ENCODE measurements at regions of chr6 and their contacts with region 1.

Region 1: DNA sequence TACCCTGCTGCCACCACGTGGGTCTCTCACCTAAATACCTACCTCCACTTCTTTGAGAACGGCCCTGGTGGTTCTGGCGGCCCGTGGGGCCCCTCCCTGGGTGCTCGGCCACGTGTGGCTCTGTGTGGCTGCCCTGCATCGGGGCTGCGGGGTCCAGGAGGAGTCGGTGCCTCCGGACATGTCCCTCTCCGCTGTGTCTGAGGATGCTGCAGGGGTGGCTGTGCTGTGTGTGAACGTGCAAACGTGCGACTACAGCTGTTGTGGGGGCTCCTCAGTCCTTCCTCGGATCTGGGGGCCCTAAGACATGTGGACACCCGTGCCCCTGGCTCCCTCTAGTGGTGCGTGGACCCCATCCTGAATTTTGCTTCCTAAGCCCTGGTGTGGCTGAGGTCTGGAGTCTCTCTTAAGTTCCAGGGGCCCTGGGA is 691.8 kb downstream of the QKI start:
- DNase-seq: peak; percentile 50 to 73
- ATAC-seq: peak in 1 of 4 donors; percentile 15
- H3K4me3 ChIP-seq: no peak overlapping the region
- H3K27ac ChIP-seq: peak overlapping the region; percentile 99
- H3K4me1 ChIP-seq: peaks cover 39% of the 10 kb centered on the region
- H3K27me3 ChIP-seq: no peaks in the 10 kb centered on the region
- CTCF ChIP-seq: peak; percentile 33

Region 2: GRCh38 chr6:163180874-163181541 is 925.3 kb before region 1 on chr6:
- intact Hi-C with region 1: loop called (anchors 2 to 5 kb)
- DNase-seq: peak; percentile 75 to 90
- ATAC-seq: peak; percentile 93 to 96 (median 94)
- H3K4me3 ChIP-seq: peak overlapping the region; percentile 54
- H3K27ac ChIP-seq: peak overlapping the region; percentile 48
- H3K4me1 ChIP-seq: peaks cover 27% of the 10 kb centered on the region
- H3K27me3 ChIP-seq: no peaks in the 10 kb centered on the region
- CTCF ChIP-seq: peak; percentile 89

Region 3: DNA sequence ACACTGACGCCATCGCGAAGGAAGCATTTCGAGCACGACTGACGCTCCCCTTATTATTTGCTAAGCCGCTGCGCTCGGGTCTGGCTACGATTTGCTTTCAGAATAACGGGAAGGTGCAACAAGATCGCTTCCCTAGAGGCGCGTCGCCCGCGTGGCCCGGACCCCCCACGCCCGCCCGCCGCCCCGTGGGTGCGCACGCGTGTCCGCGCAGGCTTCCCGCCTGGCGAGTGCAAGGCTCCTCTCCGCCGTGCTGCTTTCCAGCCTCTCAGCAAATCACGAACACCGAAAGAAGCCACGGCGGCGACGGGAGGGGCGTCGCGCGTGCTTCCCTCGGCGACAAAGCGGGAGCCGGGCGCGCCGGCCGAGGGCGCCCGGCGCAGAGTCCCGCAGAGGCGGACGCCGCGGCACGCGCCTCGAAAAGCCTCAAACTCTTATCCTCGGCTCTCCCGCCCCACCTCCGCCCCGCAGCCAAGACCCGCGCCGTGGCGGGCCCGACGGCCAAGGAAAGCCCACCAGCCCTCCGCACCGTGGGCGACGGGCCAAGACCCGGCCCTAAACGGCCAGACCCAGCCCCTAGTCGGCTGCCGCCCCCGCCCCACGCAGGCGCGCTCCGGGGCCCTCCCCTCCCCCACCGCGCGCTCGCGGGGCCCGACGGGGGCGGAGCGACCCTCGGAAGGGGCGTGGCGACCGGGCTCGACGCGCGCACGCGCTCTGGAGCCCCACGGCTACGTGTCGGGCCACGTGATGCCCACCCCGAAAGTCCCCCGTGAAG is 692.8 kb before region 1 on chr6:
- intact Hi-C with region 1: loop called in 1 of 2 experiments (anchors 1 kb)
- DNase-seq: peak; percentile 90 to 95
- ATAC-seq: peak; percentile 85 to 92 (median 89)
- H3K4me3 ChIP-seq: peak overlapping the region; percentile 73
- H3K27ac ChIP-seq: peak overlapping the region; percentile 98
- H3K4me1 ChIP-seq: peaks cover 1% of the 10 kb centered on the region
- H3K27me3 ChIP-seq: no peaks in the 10 kb centered on the region
- CTCF ChIP-seq: no peak

Region 4: DNA sequence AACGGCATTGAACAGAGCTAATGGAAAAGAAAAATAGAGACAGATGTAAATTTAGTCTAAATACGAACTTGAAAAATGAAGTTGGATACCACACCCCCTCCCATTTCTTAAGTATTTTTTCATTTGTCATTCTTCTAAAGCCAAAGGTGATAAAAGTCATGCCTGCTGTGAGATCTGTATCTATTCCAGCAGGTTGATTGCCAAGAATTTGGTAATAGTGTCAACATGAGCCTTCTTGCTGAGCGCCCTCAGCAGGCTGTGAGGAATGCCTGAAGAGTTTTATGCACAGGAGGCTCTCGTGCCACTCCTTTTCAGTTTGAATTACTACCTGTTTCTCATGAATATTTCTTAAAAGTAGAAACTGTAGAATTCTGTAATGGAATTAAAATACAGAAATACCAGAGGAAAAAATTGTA is 526.5 kb before region 1 on chr6:
- intact Hi-C with region 1: loop called in 1 of 2 experiments (anchors 5 kb)
- DNase-seq: no peak
- ATAC-seq: peak; percentile 50 to 70 (median 65)
- H3K4me3 ChIP-seq: no peak overlapping the region
- H3K27ac ChIP-seq: peak overlapping the region; percentile 83
- H3K4me1 ChIP-seq: peaks cover 55% of the 10 kb centered on the region
- H3K27me3 ChIP-seq: no peaks in the 10 kb centered on the region
- CTCF ChIP-seq: peak; percentile 31

Region 5: DNA sequence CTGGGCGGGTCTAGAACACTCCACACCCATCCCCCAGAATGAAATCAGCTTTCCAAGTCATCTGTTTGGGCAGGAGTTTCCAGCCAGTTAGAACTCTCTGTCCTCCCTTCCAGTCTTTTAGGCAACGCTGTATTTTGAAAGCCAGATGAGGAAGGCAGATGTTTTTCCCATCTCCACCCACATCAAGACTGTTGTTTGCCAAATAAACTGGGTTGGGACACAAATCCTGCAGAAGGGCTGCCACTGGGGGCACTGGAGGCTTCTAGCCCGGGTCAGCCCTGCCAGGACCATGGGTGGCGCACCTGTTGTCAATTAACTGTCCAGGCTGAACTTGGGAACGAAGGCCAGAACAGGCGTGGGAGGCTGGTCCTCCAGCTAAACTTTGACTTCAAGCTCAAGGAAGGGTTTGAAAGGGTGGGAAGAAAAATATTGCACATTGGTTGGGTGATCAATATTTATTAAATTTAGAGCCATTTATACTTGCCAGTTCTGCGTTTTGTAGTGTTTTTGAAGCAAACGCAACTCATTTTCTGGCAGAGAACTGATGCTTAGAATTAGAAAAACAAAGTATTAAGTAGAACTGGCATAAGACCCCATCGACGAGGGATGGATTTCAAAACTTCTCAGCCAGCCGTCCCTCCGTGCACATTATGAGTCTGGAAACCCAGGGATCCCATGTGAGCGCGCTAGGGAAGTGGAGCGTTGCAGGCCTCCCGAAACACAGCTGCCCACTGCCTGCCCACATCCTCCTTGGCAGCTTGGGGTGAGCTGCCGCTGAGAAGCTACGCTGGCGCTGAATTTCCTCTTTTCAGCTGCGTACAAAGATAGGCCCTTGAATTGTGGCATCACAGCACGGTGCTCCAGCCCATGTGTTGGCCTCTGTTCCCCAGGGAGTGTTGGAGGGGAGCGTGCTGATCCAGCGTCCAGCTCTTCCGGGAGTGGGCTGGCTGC is 394.5 kb before region 1 on chr6:
- intact Hi-C with region 1: loop called in 1 of 2 experiments (anchors 10 kb)
- DNase-seq: peak; percentile 94 to 95
- ATAC-seq: peak; percentile 66 to 86 (median 82)
- H3K4me3 ChIP-seq: no peak overlapping the region
- H3K27ac ChIP-seq: peak overlapping the region; percentile 76
- H3K4me1 ChIP-seq: peaks cover 61% of the 10 kb centered on the region
- H3K27me3 ChIP-seq: no peaks in the 10 kb centered on the region
- CTCF ChIP-seq: peak; percentile 48

Region 6: DNA sequence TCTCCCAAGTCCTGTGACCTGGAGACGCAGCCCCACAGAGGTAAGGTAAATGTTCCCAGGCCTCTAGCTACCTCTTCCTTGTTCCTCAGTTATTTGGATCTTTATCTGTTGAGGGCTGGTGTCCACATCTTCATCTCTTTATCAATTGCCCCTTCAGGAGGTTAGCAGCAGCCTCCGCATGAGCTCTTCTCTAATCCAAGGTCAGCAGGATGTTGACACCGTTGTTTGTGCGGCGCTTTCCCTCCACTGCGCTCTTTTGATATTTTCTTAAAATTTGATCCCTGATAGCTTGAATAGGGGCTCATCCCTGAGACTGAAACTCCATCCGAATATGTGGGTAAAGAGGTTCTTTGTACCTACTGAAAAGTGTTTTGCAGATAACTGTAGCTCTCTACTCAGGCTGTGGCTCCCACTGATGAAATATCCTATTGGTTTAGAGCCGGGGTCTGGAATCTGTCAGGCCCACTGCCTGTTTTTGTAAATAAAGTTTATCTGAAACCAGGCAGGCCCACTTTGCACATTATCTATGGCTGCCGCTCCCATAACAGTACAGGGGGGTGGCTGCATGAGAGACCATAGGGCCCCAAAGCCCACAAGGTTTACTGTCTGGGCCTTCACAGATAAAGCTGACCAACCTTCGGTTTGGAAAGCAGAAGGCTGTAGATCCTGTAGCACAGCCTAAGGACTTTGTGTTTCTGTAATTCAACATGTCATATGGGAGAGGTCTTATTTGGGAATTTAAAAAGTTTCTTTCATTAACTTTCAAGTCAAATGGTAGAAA is 329.3 kb before region 1 on chr6:
- intact Hi-C with region 1: no loop called
- DNase-seq: no peak
- ATAC-seq: no peak
- H3K4me3 ChIP-seq: no peak overlapping the region
- H3K27ac ChIP-seq: peak overlapping the region; percentile 14
- H3K4me1 ChIP-seq: peaks cover 20% of the 10 kb centered on the region
- H3K27me3 ChIP-seq: no peaks in the 10 kb centered on the region
- CTCF ChIP-seq: no peak

Region 7: DNA sequence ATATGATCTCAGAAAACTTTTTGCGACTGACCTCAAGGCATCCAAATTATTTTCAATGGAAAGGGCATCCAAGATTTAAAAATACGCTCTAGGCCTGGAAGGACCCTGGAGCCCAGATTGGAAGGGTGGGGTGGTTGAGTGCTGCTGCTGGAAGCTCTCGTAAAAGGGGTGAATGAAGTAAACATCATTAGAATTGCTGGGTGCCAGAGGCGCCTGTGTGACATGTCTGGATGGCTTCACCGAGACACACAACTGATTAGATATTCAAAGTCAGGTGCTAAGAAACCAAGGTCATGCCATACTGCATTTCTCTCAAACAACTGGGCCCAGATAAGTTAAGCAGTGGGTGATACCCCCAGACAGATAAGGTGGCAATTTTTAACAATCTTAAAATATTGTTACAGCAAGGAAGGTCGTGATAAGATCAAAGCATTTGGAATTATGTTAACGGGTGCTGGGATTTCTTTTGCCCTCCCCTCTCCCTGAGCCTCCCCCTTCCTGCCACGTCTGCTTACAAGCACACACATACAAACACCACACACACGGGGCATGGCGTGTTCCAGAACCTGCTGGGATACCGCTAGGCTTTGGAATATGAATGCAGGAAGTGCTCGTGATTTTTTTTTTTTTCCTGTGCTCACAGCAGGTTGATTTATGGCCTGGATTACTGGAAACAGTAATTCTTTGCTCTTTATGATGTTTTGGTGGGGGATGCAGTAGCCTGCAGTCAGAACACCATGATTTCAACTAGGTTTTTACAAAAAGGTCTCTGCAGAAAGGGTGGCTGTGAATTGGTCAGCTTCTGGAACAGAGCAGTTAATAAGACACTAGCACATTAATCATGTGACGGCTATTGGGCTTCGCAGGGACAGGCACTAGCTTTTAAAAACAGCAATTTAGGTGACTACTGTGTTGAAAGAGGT is 140.7 kb before region 1 on chr6:
- intact Hi-C with region 1: loop called (anchors 1 to 2 kb)
- DNase-seq: peak in 1 of 2 donors; percentile 67
- ATAC-seq: peak in 3 of 4 donors; percentile 31 to 52 (median 49)
- H3K4me3 ChIP-seq: peak overlapping the region; percentile 15
- H3K27ac ChIP-seq: peak overlapping the region; percentile 95
- H3K4me1 ChIP-seq: peaks cover 48% of the 10 kb centered on the region
- H3K27me3 ChIP-seq: no peaks in the 10 kb centered on the region
- CTCF ChIP-seq: no peak

Region 8: GRCh38 chr6:165231581-165232561 is 1125.5 kb after region 1 on chr6:
- intact Hi-C with region 1: loop called in 1 of 2 experiments (anchors 5 kb)
- DNase-seq: no peak
- ATAC-seq: peak; percentile 92 to 96 (median 94)
- H3K4me3 ChIP-seq: peak overlapping the region; percentile 52
- H3K27ac ChIP-seq: peak overlapping the region; percentile 91
- H3K4me1 ChIP-seq: peaks cover 19% of the 10 kb centered on the region
- H3K27me3 ChIP-seq: no peaks in the 10 kb centered on the region
- CTCF ChIP-seq: peak; percentile 70